Right ventricle myocardium inferior (tissue), 1 donor: ENCODE measurements at regions of chr7 and their contacts with region 1.

Region 1: GRCh38 chr7:43582503-43583423 is at the start of gene STK17A:
- DNase-seq: peak; percentile 97
- ATAC-seq: peak; percentile 98
- total RNA-seq, gene STK17A: 28.1 TPM

Region 2: DNA sequence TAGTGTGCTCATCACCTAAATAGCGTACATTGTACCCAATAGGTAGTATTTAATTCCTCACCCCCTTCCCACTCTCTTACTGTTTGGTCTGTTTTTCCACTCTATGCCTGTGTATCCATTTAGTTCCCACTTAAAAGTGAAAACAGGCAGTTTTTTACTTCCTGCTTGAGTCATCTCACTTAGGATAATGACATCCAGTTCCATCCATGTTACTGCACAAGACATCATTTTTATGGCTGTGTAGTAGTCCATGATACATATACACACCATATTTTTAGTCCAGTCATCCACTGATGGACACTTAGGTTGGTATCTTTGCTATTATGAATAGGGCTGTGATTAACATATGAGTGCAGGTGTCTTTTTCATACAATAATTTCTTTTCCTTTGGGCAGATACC is 10.2 kb after region 1 on chr7:
- intact Hi-C with region 1: loop called (anchors 1 kb)
- DNase-seq: no peak
- ATAC-seq: no peak

Region 3: GRCh38 chr7:43647673-43648472 is 65.1 kb after region 1 on chr7:
- intact Hi-C with region 1: loop called (anchors 2 kb)
- DNase-seq: peak; percentile 74
- ATAC-seq: peak; percentile 83

Region 4: DNA sequence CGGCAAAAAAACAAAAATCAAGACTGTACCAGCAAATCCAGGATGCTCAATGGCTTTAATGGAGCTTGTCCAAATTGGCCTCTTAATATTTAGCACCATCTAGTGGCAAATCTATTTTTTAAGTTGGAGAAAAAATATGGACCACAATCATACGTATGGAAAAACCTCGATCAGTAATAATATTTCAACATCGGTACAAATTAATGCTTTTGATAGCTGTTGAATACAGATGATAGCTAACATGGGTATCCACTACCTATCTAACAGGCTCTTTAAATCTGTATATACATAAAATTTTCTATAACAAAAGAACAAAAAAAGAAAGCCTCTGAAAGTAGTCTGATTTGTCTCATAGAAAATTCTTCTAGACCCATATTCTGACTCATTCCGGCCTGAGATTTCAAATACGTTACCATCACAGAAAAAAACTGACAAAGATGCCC is 117.3 kb after region 1 on chr7:
- intact Hi-C with region 1: loop called (anchors 1 kb)
- DNase-seq: no peak
- ATAC-seq: no peak

Region 5: DNA sequence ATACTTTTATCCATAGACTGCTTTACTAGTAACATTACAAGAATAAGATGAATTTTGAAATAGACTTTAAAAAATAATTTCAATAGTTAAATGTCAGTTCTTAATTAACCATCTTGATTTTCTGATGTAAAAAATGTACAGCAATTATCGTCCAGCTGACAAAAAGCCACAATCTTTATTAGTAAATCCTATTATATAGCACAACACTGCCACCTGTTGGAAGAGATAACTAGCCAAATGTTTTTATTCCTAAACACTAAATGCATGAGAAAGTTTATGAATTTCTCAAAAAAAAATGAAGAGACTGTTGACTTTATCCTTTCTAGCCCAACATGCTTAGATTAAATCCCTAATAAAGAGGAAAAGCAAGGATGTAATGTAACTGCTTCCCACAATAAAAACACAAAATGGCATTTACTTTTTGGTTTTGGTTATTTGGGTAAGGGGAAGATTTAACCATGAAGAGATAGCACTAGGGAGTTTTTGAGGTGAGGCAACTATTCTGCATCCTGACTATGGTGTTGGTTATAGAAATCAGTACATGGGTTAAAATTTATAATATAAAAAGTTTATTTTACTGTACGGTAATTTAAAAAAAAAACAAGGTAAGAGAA is 138.5 kb after region 1 on chr7:
- intact Hi-C with region 1: loop called (anchors 1 kb)
- DNase-seq: no peak
- ATAC-seq: no peak

Region 6: DNA sequence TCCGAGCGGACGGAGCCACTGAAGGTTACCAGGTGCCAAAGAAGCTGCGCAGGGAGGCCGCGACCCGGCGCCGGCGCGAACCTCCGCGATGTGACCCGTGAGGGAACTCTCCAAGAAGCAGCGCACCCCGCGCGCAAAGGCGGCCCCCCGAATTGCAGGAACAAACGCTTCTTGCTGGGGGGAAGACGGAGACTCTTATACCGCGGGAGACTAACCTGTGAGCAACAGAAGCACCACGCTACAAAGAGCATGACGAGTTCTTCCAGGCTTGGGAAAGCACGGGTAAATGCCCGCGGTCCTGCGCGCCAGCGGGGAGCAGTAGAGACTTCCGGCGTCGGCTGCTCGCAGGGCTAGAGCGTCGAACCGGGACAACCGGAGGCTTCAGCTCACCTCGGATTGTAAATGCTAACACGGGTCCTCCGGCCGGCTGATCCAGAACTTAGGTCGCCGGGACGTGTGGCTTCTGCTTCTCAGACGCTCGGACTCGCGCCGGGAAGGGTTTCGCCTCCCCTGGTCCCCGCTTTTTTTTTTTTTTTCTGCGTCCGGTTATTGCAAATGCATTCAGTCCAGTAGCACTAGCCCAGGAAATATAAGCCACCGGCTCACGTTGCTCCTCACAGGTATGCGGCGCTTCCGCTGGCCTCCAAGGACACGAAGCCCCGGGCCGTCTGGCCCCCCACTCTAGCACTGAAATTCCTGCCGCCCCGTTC is 146.6 kb after region 1 on chr7 and contains the start of gene COA1:
- intact Hi-C with region 1: loop called (anchors 2 kb)
- DNase-seq: peak; percentile 92
- ATAC-seq: peak; percentile 99
- total RNA-seq, gene COA1: 66.7 TPM

Region 7: DNA sequence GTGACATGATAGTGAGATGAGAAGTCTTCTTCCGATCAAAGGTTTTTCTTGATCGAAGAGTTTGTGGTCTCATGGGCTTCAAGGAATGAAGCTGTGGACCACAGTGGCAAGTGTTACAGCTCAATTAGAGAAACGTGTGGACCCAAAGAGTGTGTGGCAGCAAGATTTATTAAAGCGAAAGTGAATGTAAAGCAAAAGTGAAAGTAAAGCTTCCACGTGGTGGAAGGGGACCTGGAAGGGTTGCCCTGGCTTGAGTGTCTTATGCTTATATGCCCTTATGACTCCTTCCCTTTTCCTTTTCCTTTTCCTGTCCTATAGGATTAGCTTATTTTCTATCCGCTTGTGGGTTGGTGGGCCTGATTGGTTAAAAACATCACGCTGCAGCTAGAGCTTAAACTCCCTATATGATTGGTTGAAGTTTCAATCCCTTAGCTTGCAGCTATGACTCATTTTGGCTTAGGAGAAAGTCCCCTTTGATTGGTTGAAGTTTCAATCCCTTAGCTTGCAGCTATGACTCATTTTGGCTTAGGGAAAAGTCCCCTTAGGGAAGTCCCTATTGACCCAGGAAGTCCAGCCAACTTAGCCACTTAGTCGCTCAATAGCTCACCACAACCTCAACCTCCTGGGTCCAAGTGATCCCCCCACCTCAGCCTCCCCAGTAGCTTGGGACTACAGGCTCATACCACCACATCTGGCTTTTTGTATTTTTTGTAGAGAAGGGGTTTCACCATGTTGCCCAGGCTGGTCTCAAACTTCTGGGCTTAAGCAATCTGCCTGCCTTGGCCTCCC is 251.9 kb after region 1 on chr7:
- intact Hi-C with region 1: loop called (anchors 2 kb)
- DNase-seq: no peak
- ATAC-seq: no peak